IMR-90 (cell line): ENCODE measurements at regions of chr19 and their contacts with region 1.

Region 1: DNA sequence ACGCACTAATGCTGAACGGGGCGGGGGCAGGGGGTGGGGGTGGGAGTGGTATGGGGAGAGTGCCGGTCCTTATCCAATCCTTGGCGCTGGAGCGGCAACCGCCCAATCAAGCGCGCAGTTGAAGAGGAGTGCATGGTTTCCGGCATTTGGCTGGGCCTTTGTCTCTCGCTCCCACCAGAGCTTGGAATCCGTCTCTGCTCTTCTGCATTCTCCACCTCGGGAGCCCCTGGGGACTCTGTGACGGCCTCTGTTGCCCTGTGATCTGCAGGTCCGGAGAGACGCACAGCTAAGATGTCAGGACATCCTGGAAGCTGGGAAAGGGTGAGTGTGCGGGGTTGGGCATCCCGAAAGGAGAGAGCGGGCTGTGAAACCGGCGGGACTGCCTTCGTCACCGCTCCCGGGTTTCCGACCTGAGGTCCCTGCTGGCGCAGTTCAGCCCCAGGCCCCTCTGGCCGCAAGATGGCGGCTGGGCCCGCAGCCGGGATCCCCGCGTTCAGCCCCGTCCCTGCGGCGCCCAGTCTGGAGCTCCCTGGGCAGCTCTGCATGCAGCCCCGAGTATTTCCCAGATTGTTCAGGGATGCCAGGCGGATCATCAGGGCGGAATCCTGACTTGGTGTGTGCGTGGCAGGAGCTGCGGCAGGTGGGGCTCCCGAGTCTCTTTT is 53.6 kb upstream of the ZNF254 start:
- DNase-seq: peak; percentile 91
- ATAC-seq: peak; percentile 96
- H3K4me3 ChIP-seq: peak overlapping the region; percentile 97
- H3K27ac ChIP-seq: peak overlapping the region; percentile 96
- H3K4me1 ChIP-seq: no peaks in the 10 kb centered on the region
- H3K27me3 ChIP-seq: no peaks in the 10 kb centered on the region
- CTCF ChIP-seq: 0 out of 2 replicates have a peak, but pooled peaks have one; percentile 18
- POLR2A ChIP-seq: peak; percentile 86
- RAD21 ChIP-seq: peak; percentile 10; the same call in 1 of the 2 replicates

Region 2: GRCh38 chr19:23273590-23274413 is 759.6 kb before region 1 on chr19:
- CTCF ChIA-PET with region 1: no interaction called
- POLR2A ChIA-PET with region 1: no interaction called
- dilution Hi-C with region 1: no loop called
- in situ Hi-C with region 1: loop called (anchors 25 kb)
- intact Hi-C with region 1: no loop called
- DNase-seq: peak; percentile 85
- ATAC-seq: peak; percentile 99
- H3K4me3 ChIP-seq: peak overlapping the region; percentile 82
- H3K27ac ChIP-seq: peak overlapping the region; percentile 87
- H3K4me1 ChIP-seq: no peaks in the 10 kb centered on the region
- H3K27me3 ChIP-seq: no peaks in the 10 kb centered on the region
- CTCF ChIP-seq: no peak
- POLR2A ChIP-seq: peak; percentile 66; the same call in 1 of the 2 replicates
- RAD21 ChIP-seq: no peak

Region 3: DNA sequence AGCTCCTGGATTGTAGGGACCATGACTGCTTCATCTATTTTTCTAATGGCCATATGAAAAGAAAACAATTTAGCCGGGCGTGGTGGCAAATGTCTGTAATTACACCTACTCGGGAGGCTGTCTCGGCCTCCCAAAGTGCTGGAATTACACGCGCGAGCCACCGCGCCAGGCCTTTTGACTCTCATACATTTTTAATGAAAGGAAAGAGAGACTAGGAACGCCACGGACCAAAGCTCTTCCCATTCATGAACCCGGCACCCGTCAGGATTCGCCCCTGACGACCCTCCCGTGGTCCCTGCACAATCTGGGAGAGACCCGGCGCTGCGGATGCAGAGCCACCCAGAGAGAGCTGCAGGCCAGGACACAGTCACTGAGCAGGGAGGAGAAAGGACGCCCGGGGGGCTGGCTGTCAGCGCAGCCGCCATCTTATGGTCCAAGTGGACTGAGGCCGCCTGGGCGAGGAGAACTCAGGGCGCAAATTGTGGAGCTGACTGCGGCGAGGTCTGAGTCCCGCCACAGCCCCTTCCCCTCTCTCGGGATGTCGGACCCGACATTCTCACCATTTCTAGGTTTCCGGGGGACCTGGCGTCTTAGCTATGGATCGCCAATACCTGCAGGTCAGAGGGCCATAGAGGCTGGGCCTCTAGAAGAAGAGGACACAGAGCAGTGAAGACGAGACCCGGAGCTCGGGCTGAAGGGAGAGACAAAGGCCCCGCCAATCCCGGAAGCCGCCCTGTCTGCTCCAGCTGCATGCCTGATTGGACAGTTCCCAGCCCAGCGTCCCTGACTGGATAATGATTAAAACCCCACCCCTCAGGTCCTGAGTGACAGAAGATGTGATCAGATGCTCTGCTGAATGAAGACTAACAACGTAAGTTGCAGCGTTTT is 275.0 kb before region 1 on chr19 and contains the start of gene ZNF681:
- CTCF ChIA-PET with region 1: interaction called, 3 read pairs
- POLR2A ChIA-PET with region 1: no interaction called
- dilution Hi-C with region 1: no loop called
- in situ Hi-C with region 1: no loop called
- intact Hi-C with region 1: loop called (anchors 10 kb)
- DNase-seq: peak; percentile 83
- ATAC-seq: peak; percentile 95
- H3K4me3 ChIP-seq: peak within 1 kb of the TSS; percentile 96
- H3K27ac ChIP-seq: peak within 1 kb of the TSS; percentile 66
- H3K4me1 ChIP-seq: no peaks in the 10 kb centered on the region
- H3K27me3 ChIP-seq: no peaks in the 10 kb centered on the region
- CTCF ChIP-seq: no peak
- POLR2A ChIP-seq: no peak
- RAD21 ChIP-seq: no peak
- total RNA-seq, gene ZNF681: 0.54 and 0.83 TPM in 2 replicates

Region 4: DNA sequence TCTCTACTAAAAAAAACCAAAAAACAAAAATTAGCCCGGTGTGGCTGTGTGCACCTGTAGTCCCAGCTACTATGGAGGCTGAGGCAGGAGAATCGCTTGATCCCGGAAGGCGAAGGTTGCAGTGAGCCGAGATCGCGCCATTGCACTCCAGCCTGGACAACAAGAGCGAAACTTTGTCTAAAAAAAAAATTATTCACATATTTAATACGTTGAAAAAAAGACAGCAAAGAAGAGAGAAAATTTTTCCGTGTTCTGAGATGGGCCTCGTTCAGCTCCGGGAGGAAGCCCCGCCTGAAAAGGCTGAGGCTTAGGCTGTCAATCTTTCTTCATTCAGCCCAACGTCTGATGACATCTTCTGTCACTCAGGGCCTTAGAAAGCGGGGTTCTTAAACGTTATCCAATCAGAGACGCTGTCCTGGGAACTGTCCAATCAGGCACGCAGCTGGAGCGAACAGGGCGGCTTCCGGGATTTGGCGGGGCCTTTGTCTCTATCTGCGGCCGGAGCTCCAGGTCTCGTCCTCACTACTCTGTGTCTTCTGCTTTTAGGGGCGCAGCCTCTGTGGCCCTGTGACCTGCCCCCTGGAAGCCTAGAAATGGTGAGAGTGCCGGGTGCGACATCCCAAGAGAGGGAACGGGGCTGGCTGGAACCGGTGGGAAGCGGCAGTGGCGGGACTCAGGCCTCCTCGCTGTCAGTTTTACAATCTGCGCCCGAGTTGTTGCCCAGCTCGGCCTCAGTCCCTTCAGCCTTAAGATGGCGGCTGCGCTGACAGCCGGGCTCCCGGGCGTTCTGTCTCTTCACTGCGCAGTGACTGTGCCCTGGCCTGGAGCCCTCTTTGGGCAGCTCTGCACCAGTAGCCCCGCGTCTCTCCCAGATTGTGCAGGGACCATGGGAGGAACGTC is 118.8 kb before region 1 on chr19 and contains the start of gene ZNF726:
- CTCF ChIA-PET with region 1: no interaction called
- POLR2A ChIA-PET with region 1: no interaction called
- dilution Hi-C with region 1: no loop called
- in situ Hi-C with region 1: no loop called
- intact Hi-C with region 1: loop called (anchors 5 kb)
- DNase-seq: peak; percentile 87
- ATAC-seq: peak; percentile 99
- H3K4me3 ChIP-seq: peak within 1 kb of the TSS; percentile 95
- H3K27ac ChIP-seq: peak within 1 kb of the TSS; percentile 72
- H3K4me1 ChIP-seq: no peaks in the 10 kb centered on the region
- H3K27me3 ChIP-seq: no peaks in the 10 kb centered on the region
- CTCF ChIP-seq: no peak
- POLR2A ChIP-seq: 0 out of 2 replicates have a peak, but pooled peaks have one; percentile 26
- RAD21 ChIP-seq: no peak
- total RNA-seq, gene ZNF726: 1.9 and 2.0 TPM in 2 replicates

Region 5: GRCh38 chr19:24159707-24160106 is 126.3 kb after region 1 on chr19:
- CTCF ChIA-PET with region 1: no interaction called
- POLR2A ChIA-PET with region 1: no interaction called
- dilution Hi-C with region 1: no loop called
- in situ Hi-C with region 1: no loop called
- intact Hi-C with region 1: loop called (anchors 10 kb)
- DNase-seq: peak; percentile 17
- ATAC-seq: 0 out of 2 replicates have a peak, but pooled peaks have one; percentile 42
- H3K4me3 ChIP-seq: no peak overlapping the region
- H3K27ac ChIP-seq: no peak overlapping the region
- H3K4me1 ChIP-seq: no peaks in the 10 kb centered on the region
- H3K27me3 ChIP-seq: no peaks in the 10 kb centered on the region
- CTCF ChIP-seq: peak; percentile 38; the same call in 1 of the 2 replicates
- POLR2A ChIP-seq: no peak
- RAD21 ChIP-seq: peak; percentile 47